H1 (cell line): ENCODE measurements at regions of chr9 and their contacts with region 1.

Region 1: DNA sequence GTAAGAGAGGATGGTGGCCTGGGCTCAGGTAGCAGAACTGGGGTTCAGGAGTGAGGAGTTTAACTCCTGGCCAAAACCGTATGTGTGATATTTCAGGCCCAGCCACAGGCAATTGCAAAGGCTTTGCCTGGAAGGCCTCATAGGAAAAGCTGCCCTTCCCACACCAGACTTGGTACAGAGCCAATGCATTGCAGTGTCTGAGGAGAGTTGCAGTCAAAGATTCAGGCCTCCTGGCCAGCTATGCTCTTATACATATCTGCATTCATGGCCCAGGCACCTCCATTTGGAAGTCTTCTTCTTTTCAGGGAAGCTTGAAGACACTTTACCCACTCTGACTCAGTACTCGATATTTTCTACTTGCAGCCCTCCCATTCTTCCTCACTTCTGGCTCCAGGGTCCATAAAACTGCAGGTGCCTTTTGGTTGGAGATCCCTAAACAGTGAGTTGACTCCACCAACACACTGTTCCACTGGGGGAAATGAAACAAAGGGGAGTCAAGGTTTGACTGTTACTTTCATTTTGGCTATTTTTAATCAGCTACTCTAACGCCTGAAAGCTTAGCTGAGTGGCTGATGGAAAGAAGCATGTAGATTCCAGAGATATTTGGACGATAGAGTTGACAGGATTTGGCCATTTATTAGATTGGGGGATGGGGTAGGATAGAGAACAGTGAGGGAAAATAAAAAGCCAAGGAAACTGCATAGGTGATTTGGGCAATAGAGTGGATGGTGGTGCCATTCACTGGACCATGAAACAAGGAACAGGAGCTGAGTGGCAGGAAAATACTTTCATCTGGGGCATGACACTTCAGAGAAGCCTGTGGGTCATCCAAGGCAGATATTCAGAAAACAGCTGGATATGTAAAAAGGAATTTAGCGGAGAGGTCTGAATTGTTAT is 30.6 kb upstream of the IL33 start:
- DNase-seq: no peak
- H3K4me3 ChIP-seq: no peak overlapping the region
- H3K27ac ChIP-seq: no peak overlapping the region
- H3K4me1 ChIP-seq: peaks cover 0 to 5% (median 0%) of the 10 kb centered on the region in 4 experiments; a peak in 2 of 7 replicates
- H3K27me3 ChIP-seq: no peaks in the 10 kb centered on the region
- CTCF ChIP-seq: no peak
- EP300 ChIP-seq: no peak
- POLR2A ChIP-seq: no peak
- RAD21 ChIP-seq: no peak

Region 2: DNA sequence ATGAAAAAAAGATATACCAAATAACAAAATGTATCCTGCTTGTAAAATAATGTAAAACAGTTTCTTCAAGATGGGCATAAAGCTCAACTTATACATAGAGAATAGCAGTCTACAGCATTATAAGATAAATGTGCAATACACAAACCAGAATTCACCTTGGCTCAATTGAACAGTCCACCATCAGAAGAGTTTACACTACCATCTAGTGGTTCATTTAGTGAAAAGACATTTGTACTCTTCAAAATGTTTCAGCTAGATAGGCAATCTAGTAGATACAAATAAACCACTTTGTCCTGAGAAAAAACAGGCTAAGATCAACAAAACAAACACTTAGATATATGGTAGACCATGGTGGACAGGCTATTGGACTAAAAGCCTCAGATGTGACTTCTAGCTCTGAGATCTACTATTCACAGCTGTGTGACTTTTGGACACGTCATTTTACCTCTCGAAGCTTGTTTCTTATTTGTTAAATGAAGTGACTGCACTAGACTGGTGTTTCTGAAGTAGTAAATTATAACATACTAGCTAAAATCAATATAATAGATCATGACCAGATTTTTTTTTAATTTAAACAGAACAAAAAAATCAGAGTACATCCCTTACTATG is 121.1 kb after region 1 on chr9:
- CTCF ChIA-PET with region 1: interaction called, 12 read pairs
- POLR2A ChIA-PET with region 1: no interaction called
- DNase-seq: no peak
- H3K4me3 ChIP-seq: no peak overlapping the region
- H3K27ac ChIP-seq: no peak overlapping the region
- H3K4me1 ChIP-seq: no peaks in the 10 kb centered on the region
- H3K27me3 ChIP-seq: no peaks in the 10 kb centered on the region
- CTCF ChIP-seq: peak in 2 of 3 experiments; percentile 42 to 48; a peak in 2 of 4 replicates
- EP300 ChIP-seq: no peak
- POLR2A ChIP-seq: no peak
- RAD21 ChIP-seq: peak; percentile 82 to 85

Region 3: DNA sequence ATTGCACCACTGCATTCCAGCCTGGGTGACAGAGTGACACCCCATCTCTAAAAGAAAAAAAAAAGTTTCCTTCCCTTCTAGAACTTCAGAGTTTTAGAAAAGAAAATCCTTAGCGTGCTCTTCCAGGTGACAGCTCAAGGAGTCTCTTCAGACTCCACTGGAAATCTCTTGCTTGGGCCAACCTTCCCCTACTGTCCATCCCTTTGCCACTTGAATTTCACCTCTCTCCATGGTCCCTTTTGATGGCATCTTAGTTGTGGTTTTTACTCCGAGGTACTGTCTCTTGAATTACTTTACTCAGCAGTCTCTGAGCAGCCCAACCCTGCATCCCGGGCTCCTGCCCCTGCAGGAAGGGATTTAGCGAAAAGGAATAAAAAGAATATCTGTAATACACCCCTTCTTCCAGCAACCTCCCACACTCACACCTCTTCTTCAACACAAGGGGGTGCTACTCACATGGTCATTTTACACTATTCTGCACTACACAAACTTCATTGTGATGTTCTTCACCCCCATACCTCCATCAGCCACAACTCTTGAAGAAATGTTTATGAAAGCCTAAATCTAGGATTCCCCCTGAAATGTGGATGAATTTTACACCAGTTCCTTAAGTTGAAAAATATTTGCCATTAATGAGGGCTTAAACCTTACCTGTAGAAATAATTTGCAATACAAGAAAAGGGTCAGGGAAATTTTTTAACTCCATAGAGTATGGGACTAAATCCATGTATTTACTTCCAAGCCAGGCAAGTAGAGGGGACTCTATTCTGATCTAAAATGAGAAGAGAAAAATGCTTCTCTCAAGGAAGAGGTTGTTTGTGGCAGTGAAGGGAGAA is 169.1 kb after region 1 on chr9:
- CTCF ChIA-PET with region 1: no interaction called
- POLR2A ChIA-PET with region 1: no interaction called
- DNase-seq: peak; percentile 0 to 51
- H3K4me3 ChIP-seq: no peak overlapping the region
- H3K27ac ChIP-seq: no peak overlapping the region
- H3K4me1 ChIP-seq: no peaks in the 10 kb centered on the region
- H3K27me3 ChIP-seq: no peaks in the 10 kb centered on the region
- CTCF ChIP-seq: peak in 2 of 3 experiments; percentile 56 to 69; a peak in 3 of 4 replicates
- EP300 ChIP-seq: no peak
- POLR2A ChIP-seq: no peak
- RAD21 ChIP-seq: peak; percentile 85